ENCODE measurements at regions of chr14 and their contacts with region 1.

Region 1: GRCh38 chr14:76876076-76876475 is 49.9 kb downstream of the LRRC74A start:
- DNase-seq: no peak

Region 2: GRCh38 chr14:76910371-76910890 is 34.4 kb after region 1 on chr14:
- intact Hi-C with region 1: loop called (anchors 5 kb)
- DNase-seq: no peak

Region 3: DNA sequence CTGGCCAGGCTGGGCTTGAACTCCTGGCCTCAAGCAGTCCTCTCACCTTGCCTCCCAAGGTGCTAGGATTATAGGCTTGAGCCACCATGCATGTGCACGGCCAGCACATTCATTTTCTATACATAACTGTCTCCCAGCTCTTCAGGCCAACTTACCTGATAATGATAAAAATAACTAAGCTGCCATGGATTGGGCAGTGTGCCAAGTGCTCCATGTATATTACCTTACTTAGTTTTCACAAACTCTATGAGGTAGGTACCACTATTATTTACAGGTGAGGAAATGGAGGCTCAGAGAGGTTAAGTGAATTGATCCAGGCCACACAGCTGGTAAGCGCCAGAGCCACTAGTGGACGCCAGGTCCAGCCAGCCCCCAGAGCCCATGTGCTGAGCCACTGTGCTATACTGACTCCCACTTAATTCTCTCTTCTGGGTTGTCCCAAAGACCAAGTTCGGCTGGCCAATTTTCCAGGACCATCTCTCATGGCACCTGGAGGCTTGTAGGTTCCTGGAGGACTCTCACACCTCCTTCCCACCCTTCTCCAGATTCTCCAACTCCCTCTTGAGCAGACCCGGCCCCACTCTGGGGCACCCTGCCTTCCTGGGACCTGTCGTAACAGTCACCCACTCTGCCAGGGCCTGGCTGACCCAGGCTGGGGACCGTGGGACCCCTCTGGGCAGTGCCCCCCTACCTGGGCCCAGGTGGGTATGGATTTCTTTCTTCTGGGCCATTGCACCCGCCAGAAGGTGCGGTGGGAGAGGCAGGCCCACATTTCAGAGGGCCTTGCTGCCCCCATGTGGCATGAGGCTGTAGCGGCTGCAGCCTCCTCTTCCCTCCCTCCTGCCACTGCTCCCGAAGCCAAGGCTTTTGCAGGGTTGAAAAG is 191.8 kb after region 1 on chr14:
- intact Hi-C with region 1: loop called (anchors 1 kb)
- DNase-seq: no peak

Measured in cardiac septum (tissue), 1 donor.